IMR-90 (cell line): ENCODE measurements at regions of chr14 and their contacts with region 1.

Region 1: GRCh38 chr14:22781586-22781991 is 15.1 kb downstream of the OXA1L start:
- DNase-seq: peak; percentile 43
- ATAC-seq: peak; percentile 70
- H3K4me3 ChIP-seq: no peak overlapping the region
- H3K27ac ChIP-seq: no peak overlapping the region
- H3K4me1 ChIP-seq: peaks cover 12% of the 10 kb centered on the region
- H3K27me3 ChIP-seq: no peaks in the 10 kb centered on the region
- CTCF ChIP-seq: no peak
- POLR2A ChIP-seq: no peak
- RAD21 ChIP-seq: no peak

Region 2: DNA sequence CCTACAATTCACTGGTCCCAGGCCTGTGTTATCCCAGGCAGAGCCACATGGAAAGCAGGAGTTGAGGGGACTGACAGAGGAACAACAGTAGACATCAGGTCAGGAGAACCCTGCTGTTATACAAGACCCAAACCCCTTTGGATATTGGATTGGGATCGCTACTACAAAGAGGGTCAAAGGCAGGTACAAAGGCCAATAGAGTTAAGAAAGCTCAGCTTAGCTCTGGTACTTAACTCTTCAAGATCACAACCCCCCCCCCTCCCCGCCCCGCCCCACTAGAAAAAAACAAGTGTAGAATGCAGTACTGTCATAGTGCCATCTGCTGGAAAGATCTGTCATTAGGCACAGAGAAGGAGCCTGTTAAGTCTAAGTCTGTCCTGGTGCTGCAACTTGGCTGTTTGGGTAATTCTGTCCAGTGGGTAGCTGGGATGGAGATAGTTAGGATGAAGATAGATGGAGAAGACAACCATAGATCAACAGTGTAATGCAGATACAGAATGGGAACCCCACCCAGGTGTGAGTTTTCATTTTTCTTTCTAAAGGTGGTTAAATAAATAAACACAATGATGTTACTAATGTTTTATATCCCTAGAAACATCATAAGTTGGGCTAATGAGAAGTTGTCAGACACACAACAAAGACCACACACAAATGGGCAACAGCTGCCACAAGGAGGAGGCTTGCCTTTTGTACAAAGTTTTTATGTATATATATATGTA is 118.7 kb after region 1 on chr14:
- CTCF ChIA-PET with region 1: no interaction called
- POLR2A ChIA-PET with region 1: no interaction called
- dilution Hi-C with region 1: no loop called
- in situ Hi-C with region 1: no loop called
- intact Hi-C with region 1: loop called (anchors 5 kb)
- DNase-seq: peak; percentile 78
- ATAC-seq: peak; percentile 81
- H3K4me3 ChIP-seq: no peak overlapping the region
- H3K27ac ChIP-seq: no peak overlapping the region
- H3K4me1 ChIP-seq: peaks cover 17% of the 10 kb centered on the region
- H3K27me3 ChIP-seq: no peaks in the 10 kb centered on the region
- CTCF ChIP-seq: peak; percentile 74
- POLR2A ChIP-seq: no peak
- RAD21 ChIP-seq: peak; percentile 71